HEK293 (cell line): ENCODE measurements at regions of chr1 and their contacts with region 1.

Region 1: GRCh38 chr1:235597867-235598553 is 51.6 kb downstream of the GNG4 start:
- H3K4me3 ChIP-seq: no peak overlapping the region
- H3K27ac ChIP-seq: no peak overlapping the region
- H3K4me1 ChIP-seq: no peaks in the 10 kb centered on the region
- CTCF ChIP-seq: peak; percentile 27; the same call in 1 of the 2 replicates

Region 2: DNA sequence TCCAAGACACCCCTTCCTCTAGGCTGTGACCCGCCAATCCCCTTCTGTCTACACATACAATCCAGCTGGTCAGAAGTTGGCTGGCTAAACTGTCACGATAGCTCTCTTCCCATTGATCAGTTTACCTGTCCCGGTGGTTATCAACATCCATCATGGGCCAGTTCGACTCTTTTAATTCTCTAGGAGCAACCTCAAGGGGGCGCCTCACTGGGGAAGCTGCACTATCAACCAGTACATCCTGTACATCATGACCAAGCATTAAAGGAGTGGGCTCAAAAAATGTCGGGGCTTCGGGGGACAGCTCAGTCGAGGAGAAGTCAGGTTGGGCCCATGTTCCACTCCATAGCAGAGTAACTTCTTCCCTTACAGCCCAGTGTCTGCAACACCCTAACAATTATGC is 40.5 kb before region 1 on chr1:
- CTCF ChIA-PET with region 1: interaction called, 21 read pairs
- POLR2A ChIA-PET with region 1: interaction called, 3 read pairs
- H3K4me3 ChIP-seq: no peak overlapping the region
- H3K27ac ChIP-seq: no peak overlapping the region
- H3K4me1 ChIP-seq: no peaks in the 10 kb centered on the region
- CTCF ChIP-seq: no peak

Region 3: GRCh38 chr1:235608278-235608677 is 10.3 kb after region 1 on chr1:
- CTCF ChIA-PET with region 1: interaction called, 20 read pairs
- POLR2A ChIA-PET with region 1: no interaction called
- H3K4me3 ChIP-seq: no peak overlapping the region
- H3K27ac ChIP-seq: no peak overlapping the region
- H3K4me1 ChIP-seq: no peaks in the 10 kb centered on the region
- CTCF ChIP-seq: no peak

Region 4: GRCh38 chr1:235632506-235633401 is 34.7 kb after region 1 on chr1:
- CTCF ChIA-PET with region 1: interaction called, 12 read pairs
- POLR2A ChIA-PET with region 1: no interaction called
- H3K4me3 ChIP-seq: peak overlapping the region; percentile 7
- H3K27ac ChIP-seq: no peak overlapping the region
- H3K4me1 ChIP-seq: peaks cover 18% of the 10 kb centered on the region
- CTCF ChIP-seq: no peak

Region 5: DNA sequence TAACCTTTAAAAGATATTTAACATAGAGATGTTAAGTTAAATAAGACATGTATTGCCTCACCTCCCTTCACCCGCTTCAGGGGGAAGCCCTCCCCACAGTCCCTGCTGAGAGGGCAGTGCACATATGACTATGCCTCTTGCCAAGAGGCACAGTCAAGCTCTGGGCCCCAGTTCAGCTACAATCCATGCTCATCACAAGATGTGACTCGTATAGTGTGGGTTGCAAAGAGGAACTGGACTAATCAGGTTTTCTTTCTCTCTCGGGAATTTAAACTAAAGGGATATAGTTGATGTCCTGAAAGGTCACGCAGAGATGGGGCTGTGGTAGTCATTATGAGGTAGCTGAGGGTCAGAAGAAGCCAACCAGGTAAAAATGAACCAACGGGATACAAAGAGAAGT is 233.1 kb after region 1 on chr1:
- CTCF ChIA-PET with region 1: no interaction called
- POLR2A ChIA-PET with region 1: no interaction called
- H3K4me3 ChIP-seq: no peak overlapping the region
- H3K27ac ChIP-seq: no peak overlapping the region
- H3K4me1 ChIP-seq: no peaks in the 10 kb centered on the region
- CTCF ChIP-seq: no peak